ENCODE measurements at regions of chr1 and their contacts with region 1.

Region 1: DNA sequence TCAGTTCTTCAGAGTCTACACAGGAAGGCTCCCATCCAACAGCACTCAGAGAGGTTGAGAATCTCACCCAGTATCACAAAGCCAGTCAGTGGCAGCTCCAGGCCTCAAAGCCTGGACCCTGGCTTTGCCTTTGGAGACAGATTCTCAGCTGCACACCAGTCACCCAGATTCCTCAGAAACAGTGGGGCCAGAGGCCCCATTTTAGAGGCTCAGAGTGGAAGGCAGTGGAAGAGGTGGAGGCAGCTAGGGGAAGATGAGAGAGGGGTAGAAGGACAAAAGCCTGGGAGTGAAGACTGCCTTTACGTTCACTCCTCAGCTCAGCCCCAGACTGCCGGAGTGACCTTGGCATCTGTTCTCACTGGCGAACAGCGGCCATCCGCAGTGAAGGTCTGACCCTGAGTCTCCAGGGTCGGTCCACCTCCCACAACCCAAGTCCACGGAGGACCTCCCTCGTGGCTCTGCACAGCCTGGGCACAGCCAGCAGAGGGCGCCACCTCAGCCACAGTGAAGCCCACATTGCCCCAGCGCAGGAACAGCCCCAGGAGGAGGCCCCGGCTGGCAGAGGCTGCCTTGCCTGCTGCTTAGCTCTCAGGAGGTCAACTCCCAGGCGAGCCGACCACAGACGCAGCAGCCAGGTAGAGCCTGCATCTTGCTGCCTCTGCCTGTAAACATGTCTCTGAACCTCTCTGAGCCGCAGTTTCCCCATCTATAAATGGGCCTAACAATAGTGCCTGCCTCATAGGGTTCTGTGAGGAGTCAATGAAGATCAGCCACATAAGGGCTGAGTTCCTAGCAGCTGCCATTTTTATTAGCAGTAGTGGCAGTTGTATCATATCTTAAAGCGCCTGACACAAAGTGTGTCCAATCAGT is 5.9 kb upstream of the FNDC5 start:
- DNase-seq: peak; percentile 73
- ATAC-seq: peak; percentile 80
- H3K4me3 Mint-ChIP-seq: no peak overlapping the region
- H3K27ac Mint-ChIP-seq: no peak overlapping the region
- H3K4me1 Mint-ChIP-seq: peaks cover 3% of the 10 kb centered on the region
- H3K27me3 Mint-ChIP-seq: peaks cover 36% of the 10 kb centered on the region

Region 2: GRCh38 chr1:32709075-32709474 is 167.5 kb before region 1 on chr1:
- CTCF ChIA-PET with region 1: interaction called, 72 read pairs
- POLR2A ChIA-PET with region 1: no interaction called
- DNase-seq: no peak
- ATAC-seq: no peak
- H3K4me3 Mint-ChIP-seq: no peak overlapping the region
- H3K27ac Mint-ChIP-seq: no peak overlapping the region
- H3K4me1 Mint-ChIP-seq: peaks cover 6% of the 10 kb centered on the region
- H3K27me3 Mint-ChIP-seq: peaks cover 11% of the 10 kb centered on the region

Region 3: DNA sequence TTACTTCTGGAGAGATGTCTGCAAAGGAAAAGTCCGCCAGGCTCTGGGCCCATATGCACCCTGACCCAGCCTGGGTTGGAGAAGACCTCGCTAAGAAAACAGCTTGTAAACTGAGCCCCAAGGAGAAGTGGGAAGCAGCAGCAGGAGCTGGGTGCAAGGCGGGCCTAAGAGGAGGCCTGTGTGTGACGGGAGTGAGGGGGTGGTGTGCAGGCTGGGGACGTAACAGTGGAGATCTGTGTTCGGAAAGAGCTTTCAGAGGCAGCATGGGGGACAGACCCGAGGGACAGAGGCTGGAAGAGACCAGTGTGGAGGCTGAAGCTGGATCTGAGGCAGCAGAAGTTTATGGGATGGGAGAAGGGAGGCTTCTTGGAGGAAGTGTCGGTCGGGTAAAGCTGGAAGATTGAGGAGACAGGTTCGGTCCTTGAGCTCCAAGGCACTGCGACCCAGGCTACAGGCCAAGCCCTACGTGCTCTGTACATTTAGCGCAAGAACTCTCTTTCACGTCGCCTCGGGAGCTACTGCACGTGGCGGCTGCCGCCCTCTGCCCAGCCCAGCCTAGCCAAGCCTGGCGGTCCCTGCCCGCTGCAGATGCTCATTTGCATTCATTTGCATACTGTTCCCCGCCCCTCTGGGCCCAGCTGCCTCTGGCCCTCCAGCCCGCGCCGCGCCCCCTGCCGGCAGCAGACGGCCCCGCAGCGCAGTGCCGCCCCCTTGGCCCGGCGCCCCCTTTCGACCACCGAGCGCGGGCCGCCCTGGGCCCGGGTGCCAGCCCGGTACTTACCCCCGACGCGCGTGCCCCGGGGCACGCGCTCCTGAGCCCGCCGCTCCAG is 16.0 kb after region 1 on chr1:
- CTCF ChIA-PET with region 1: interaction called, 33 read pairs
- POLR2A ChIA-PET with region 1: no interaction called
- DNase-seq: peak; percentile 49
- ATAC-seq: peak; percentile 78
- H3K4me3 Mint-ChIP-seq: no peak overlapping the region
- H3K27ac Mint-ChIP-seq: no peak overlapping the region
- H3K4me1 Mint-ChIP-seq: peaks cover 4% of the 10 kb centered on the region
- H3K27me3 Mint-ChIP-seq: peaks cover 66% of the 10 kb centered on the region

Region 4: DNA sequence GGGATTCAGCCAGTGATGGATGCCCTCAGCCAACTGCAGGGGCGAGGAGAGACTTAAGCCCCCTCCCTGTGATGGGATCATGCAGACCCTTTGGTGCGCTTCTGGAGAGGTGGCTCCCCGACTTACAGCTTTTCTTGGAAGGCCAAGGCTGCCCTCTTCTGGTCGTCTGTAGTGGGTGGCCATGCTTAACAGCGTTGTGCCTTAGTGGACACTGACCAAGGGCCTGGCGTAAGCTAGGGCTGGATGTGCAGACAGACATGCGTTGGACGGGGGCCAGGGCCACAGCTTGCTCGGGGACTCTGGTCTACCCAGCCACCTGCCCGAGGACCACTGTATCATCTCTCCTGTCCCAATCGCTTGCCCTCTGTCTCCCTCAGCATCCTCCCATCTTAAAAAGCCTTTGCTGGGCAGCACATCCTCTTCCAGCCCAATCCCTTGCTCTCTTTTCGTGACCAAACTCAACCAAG is 209.8 kb after region 1 on chr1:
- CTCF ChIA-PET with region 1: interaction called, 20 read pairs
- POLR2A ChIA-PET with region 1: no interaction called
- DNase-seq: peak; percentile 55
- ATAC-seq: no peak
- H3K4me3 Mint-ChIP-seq: no peak overlapping the region
- H3K27ac Mint-ChIP-seq: no peak overlapping the region
- H3K4me1 Mint-ChIP-seq: peaks cover 66% of the 10 kb centered on the region
- H3K27me3 Mint-ChIP-seq: peaks cover 7% of the 10 kb centered on the region